Spleen (tissue), 13 donors: ENCODE measurements at regions of chr11 and their contacts with region 1.

Region 1: DNA sequence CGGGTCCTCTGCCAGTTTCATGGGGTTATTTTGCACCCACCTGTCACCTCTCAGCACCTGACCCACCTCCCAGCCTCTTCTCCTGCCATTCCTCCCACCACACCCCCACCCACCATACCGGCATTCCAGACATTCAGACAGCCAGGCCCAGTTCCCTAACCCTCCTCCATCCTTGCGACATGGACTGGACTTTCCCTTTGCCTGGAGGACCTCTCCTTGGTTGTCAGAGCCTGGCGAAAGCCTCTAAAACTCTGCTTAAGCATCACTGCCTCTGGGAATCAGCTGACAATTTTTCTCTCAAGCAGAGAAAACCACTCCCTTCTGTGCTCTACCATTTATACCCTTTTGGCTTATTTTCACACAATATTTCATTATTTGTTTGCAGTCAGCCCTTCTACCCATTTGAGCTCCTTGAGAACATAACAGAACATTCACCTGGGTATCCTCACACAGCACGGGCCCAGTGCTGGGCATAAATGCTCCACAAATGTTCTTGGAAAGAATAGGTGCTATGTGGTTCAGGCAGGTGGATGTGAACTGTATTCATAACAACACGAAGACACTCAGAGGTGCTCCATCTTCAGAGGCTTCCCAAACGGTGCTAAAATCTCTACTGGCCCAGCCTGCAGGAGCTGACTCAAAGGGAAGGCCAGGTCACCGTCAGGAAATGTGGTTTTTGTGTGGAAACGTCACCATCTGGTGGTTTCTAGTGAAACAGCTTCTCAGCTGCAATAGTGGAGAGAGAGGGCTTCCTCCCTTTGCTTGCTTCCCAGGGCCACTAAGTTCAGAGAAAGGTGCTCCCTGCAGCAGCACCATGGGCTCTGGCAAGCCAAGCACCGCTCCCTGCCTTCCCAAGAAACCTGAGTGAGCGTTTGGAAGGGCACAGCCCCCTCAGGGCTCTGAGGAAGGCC is 10.4 kb downstream of the SPATA19 start:
- DNase-seq: no peak
- H3K4me3 ChIP-seq: no peak overlapping the region
- H3K27ac ChIP-seq: no peak overlapping the region
- H3K4me1 ChIP-seq: no peaks in the 10 kb centered on the region
- H3K27me3 ChIP-seq: peaks cover 0 to 21% (median 4%) of the 10 kb centered on the region in 7 donors
- CTCF ChIP-seq: peak; percentile 13 to 77 (median 65)
- POLR2A ChIP-seq: no peak

Region 2: GRCh38 chr11:133082851-133083488 is 752.0 kb before region 1 on chr11:
- intact Hi-C with region 1: loop called (anchors 5 kb)
- DNase-seq: peak; percentile 87
- H3K4me3 ChIP-seq: peak overlapping the region; percentile 9 to 63 (median 18)
- H3K27ac ChIP-seq: no peak overlapping the region
- H3K4me1 ChIP-seq: peaks cover 0 to 11% (median 6%) of the 10 kb centered on the region in 6 donors
- H3K27me3 ChIP-seq: peaks cover 0 to 79% (median 8%) of the 10 kb centered on the region in 7 donors
- CTCF ChIP-seq: peak in 8 of 11 experiments; percentile 27 to 90 (median 76)
- POLR2A ChIP-seq: no peak

Region 3: GRCh38 chr11:133134314-133135173 is 700.4 kb before region 1 on chr11:
- intact Hi-C with region 1: loop called (anchors 10 kb)
- DNase-seq: no peak
- H3K4me3 ChIP-seq: no peak overlapping the region
- H3K27ac ChIP-seq: no peak overlapping the region
- H3K4me1 ChIP-seq: peaks cover 0 to 5% (median 0%) of the 10 kb centered on the region in 6 donors
- H3K27me3 ChIP-seq: peaks cover 0 to 22% (median 0%) of the 10 kb centered on the region in 7 donors
- CTCF ChIP-seq: peak; percentile 38 to 84 (median 68)
- POLR2A ChIP-seq: no peak

Region 4: GRCh38 chr11:133163463-133164419 is 671.2 kb before region 1 on chr11:
- intact Hi-C with region 1: loop called (anchors 10 kb)
- DNase-seq: no peak
- H3K4me3 ChIP-seq: no peak overlapping the region
- H3K27ac ChIP-seq: no peak overlapping the region
- H3K4me1 ChIP-seq: no peaks in the 10 kb centered on the region
- H3K27me3 ChIP-seq: peaks cover 0 to 18% (median 0%) of the 10 kb centered on the region in 7 donors
- CTCF ChIP-seq: peak in 9 of 11 experiments; percentile 34 to 72 (median 55)
- POLR2A ChIP-seq: no peak

Region 5: GRCh38 chr11:134124660-134125451 is 289.9 kb after region 1 on chr11:
- intact Hi-C with region 1: no loop called
- DNase-seq: peak; percentile 76
- H3K4me3 ChIP-seq: peak overlapping the region in 5 of 8 donors; percentile 7 to 57 (median 24)
- H3K27ac ChIP-seq: peak overlapping the region in 1 of 8 donors; percentile 20
- H3K4me1 ChIP-seq: peaks cover 0 to 41% (median 16%) of the 10 kb centered on the region in 6 donors
- H3K27me3 ChIP-seq: peaks cover 0 to 39% (median 0%) of the 10 kb centered on the region in 7 donors
- CTCF ChIP-seq: no peak
- POLR2A ChIP-seq: no peak